GM12878 (cell line): ENCODE measurements at regions of chr4 and their contacts with region 1.

Region 1: DNA sequence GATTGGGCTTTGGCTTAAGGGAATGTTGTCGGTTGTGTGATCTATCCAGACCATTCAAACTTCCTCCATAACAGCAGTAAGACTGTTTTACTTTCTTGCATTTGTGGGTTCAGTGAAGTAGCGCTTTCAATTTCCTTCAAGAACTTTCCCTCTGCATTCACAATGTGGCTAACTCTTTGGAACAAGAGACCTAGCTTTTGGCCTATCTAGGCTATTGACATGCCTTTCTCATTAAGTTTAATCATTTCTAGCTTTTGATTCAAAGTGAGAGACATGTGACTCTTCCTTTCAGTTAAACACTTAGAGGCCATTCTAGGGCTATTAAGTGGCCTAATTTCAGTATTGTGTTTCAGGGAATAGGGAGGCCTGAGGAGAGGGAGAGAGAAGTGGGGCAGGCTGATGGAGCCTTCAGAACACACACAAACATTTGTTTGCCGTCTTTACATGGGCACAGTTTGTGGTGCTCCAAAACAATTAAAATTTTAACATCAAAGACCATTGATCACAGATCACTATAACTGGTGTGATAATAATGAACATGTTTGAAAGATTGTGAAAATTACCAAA is 34.1 kb downstream of the ADH5 start:
- DNase-seq: peak; percentile 26
- ATAC-seq: peak; percentile 79
- H3K4me3 ChIP-seq: no peak overlapping the region
- H3K27ac ChIP-seq: no peak overlapping the region
- H3K4me1 ChIP-seq: peaks cover 10% of the 10 kb centered on the region
- H3K27me3 ChIP-seq: no peaks in the 10 kb centered on the region
- CTCF ChIP-seq: no peak
- EP300 ChIP-seq: 0 out of 4 replicates have a peak, but pooled peaks of 1 of the 2 experiments have one; percentile 41
- POLR2A ChIP-seq: no peak
- RAD21 ChIP-seq: no peak

Region 2: GRCh38 chr4:98143001-98143899 is 911.3 kb before region 1 on chr4 and contains the start of gene STPG2:
- CTCF ChIA-PET with region 1: interaction called, 11 read pairs
- POLR2A ChIA-PET with region 1: no interaction called
- RAD21 ChIA-PET with region 1: no interaction called
- SMC1A ChIA-PET with region 1: no interaction called
- in situ Hi-C with region 1: loop called (anchors 10 kb)
- intact Hi-C with region 1: no loop called
- DNase-seq: peak; percentile 51
- ATAC-seq: peak; percentile 100
- H3K4me3 ChIP-seq: peak within 1 kb of the TSS; percentile 75
- H3K27ac ChIP-seq: peak within 1 kb of the TSS; percentile 92
- H3K4me1 ChIP-seq: peaks cover 3% of the 10 kb centered on the region
- H3K27me3 ChIP-seq: peaks cover 0 to 2% of the 10 kb centered on the region in 2 experiments; a peak in 1 of 4 replicates
- CTCF ChIP-seq: peak; percentile 33 to 55 (median 44)
- EP300 ChIP-seq: no peak
- POLR2A ChIP-seq: peak; percentile 79
- RAD21 ChIP-seq: 0 out of 2 replicates have a peak, but pooled peaks have one; percentile 12
- polyA plus RNA-seq, gene STPG2: not detected

Region 3: DNA sequence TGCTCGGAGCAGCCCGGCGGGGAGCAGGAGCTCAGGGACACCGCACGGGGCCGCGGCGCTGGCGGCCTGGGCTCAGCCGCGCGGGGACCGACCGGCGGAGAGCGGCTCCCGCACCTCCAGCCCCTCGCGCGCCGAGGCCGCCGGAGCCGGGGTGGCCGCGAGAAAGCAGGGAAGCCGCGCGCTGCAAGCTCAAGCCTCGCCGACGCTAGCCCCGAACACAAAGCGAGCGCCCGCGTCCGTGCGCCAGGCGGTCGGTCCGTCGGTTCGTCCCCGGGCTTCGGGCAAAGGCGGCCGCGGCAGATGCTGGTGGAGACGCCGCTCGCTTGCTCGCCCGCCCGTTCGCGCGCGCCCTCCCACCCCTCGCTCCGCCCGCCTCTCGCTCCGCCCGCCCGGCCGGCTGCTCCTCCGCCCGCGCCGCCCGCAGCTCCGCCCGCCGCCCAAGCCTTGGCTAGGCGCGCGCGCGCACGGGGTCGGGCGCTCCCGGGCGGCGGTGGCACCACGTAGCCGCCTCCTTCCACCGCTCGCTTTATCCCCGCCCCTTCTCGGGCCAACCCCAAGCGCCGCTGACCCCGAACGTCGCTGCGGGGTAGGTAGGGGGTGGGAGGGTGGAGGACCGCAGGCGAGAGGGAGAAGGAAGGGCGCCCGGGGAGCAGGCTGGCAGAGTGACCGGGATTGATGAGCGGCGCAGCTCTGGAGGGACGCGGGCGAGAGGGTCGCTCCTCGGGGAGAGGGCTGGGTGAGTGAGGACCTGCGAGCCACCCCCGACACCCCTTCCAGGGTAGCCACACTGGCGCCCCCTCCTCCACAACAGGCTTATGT is 396.0 kb before region 1 on chr4 and contains the start of gene TSPAN5:
- CTCF ChIA-PET with region 1: no interaction called
- POLR2A ChIA-PET with region 1: no interaction called
- RAD21 ChIA-PET with region 1: no interaction called
- SMC1A ChIA-PET with region 1: no interaction called
- in situ Hi-C with region 1: no loop called
- intact Hi-C with region 1: loop called (anchors 10 kb)
- DNase-seq: no peak
- ATAC-seq: peak; percentile 84
- H3K4me3 ChIP-seq: peak within 1 kb of the TSS; percentile 65
- H3K27ac ChIP-seq: no peak within 1 kb of the TSS
- H3K4me1 ChIP-seq: peaks cover 10% of the 10 kb centered on the region
- H3K27me3 ChIP-seq: peaks cover 4 to 23% of the 10 kb centered on the region in 2 experiments
- CTCF ChIP-seq: no peak
- EP300 ChIP-seq: no peak
- POLR2A ChIP-seq: peak; percentile 33; the same call in 1 of the 2 replicates
- RAD21 ChIP-seq: no peak
- polyA plus RNA-seq, gene TSPAN5: 0.22 to 0.23 TPM

Region 4: GRCh38 chr4:98939892-98940298 is 114.6 kb before region 1 on chr4:
- CTCF ChIA-PET with region 1: interaction called, 15 read pairs
- POLR2A ChIA-PET with region 1: no interaction called
- RAD21 ChIA-PET with region 1: no interaction called
- SMC1A ChIA-PET with region 1: interaction called, 3 read pairs
- in situ Hi-C with region 1: no loop called
- intact Hi-C with region 1: loop called (anchors 5 kb)
- DNase-seq: no peak
- ATAC-seq: peak; percentile 82
- H3K4me3 ChIP-seq: no peak overlapping the region
- H3K27ac ChIP-seq: no peak overlapping the region
- H3K4me1 ChIP-seq: no peaks in the 10 kb centered on the region
- H3K27me3 ChIP-seq: no peaks in the 10 kb centered on the region
- CTCF ChIP-seq: peak; percentile 48 to 73 (median 65)
- EP300 ChIP-seq: no peak
- POLR2A ChIP-seq: no peak
- RAD21 ChIP-seq: peak; percentile 48

Region 5: DNA sequence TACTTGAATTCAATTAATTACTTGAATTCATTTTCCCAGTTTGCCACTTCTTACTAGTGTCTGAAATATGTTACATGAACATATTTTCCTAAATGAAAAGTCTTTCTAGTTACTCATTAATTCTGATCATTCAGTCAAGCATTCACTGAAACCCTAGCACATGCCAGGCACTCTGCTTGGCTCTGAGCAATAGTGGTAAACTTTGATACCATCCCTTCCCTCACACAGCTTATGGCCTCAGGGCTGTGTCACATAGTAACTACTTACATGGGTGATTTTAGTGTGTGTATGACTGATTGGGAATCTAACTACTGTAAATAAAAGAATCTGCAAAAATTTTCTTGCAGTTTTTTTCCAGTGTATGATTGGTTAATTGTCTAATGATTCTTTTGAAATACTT is 26.3 kb before region 1 on chr4:
- CTCF ChIA-PET with region 1: interaction called, 19 read pairs
- POLR2A ChIA-PET with region 1: no interaction called
- RAD21 ChIA-PET with region 1: interaction called, 5 read pairs
- SMC1A ChIA-PET with region 1: interaction called, 15 read pairs
- in situ Hi-C with region 1: no loop called
- intact Hi-C with region 1: no loop called
- DNase-seq: no peak
- ATAC-seq: peak; percentile 85
- H3K4me3 ChIP-seq: no peak overlapping the region
- H3K27ac ChIP-seq: no peak overlapping the region
- H3K4me1 ChIP-seq: peaks cover 4% of the 10 kb centered on the region; the same call in 1 of the 2 replicates
- H3K27me3 ChIP-seq: no peaks in the 10 kb centered on the region
- CTCF ChIP-seq: no peak
- EP300 ChIP-seq: no peak
- POLR2A ChIP-seq: no peak
- RAD21 ChIP-seq: no peak

Region 6: DNA sequence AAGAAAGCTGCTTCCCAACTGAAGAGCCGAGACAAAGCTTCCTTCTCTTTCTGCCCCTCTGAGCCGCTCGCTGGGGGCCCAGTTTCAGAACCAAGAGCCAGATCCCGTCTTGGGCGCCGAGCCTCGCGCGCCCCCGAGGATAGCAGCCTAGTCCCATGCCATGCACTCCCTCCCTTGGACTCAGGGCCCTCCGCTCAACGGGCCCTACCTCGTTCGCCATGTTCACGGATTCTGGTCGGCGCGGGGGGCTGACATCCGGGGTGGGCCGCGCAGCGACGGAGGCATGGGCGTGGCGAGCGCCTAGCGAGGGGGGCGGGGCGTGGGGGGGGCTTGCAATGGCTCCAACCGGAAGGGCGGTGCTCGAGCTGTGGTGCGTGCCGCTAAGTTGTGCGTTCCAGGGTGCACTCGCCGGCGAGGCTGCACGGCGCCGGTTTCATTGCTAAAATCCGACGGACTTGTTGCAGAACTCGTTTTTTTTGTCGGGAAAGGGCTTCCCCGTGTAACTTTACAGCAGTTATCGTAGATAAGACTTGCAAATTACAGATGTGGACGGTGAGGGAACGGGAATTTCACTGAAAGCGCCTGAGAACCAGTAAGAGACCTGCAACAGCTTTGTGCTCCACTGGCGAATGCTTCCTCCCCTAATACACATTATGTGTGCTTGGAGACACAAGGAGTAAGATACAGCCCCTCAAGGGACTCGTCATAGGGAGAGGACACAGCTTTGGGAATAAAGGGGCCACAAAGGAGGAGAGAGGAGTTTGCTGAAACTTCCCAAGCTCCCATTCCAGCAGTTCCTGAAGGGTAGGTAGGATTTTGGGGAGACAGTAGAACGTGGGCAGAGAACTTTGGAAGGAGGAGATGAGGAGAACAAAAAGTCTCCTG is 34.2 kb after region 1 on chr4 and contains the start of gene ADH5:
- CTCF ChIA-PET with region 1: interaction called, 36 read pairs
- POLR2A ChIA-PET with region 1: interaction called, 3 read pairs
- RAD21 ChIA-PET with region 1: interaction called, 5 read pairs
- SMC1A ChIA-PET with region 1: interaction called, 7 read pairs
- in situ Hi-C with region 1: no loop called
- intact Hi-C with region 1: no loop called
- DNase-seq: peak; percentile 51
- ATAC-seq: peak; percentile 95
- H3K4me3 ChIP-seq: peak within 1 kb of the TSS; percentile 90
- H3K27ac ChIP-seq: peak within 1 kb of the TSS; percentile 76
- H3K4me1 ChIP-seq: no peaks in the 10 kb centered on the region
- H3K27me3 ChIP-seq: no peaks in the 10 kb centered on the region
- CTCF ChIP-seq: no peak
- EP300 ChIP-seq: no peak
- POLR2A ChIP-seq: peak; percentile 96
- RAD21 ChIP-seq: no peak
- polyA plus RNA-seq, gene ADH5: 96.3 to 134 TPM

Region 7: GRCh38 chr4:99991741-99992140 is 937.2 kb after region 1 on chr4:
- CTCF ChIA-PET with region 1: no interaction called
- POLR2A ChIA-PET with region 1: no interaction called
- RAD21 ChIA-PET with region 1: no interaction called
- SMC1A ChIA-PET with region 1: no interaction called
- in situ Hi-C with region 1: no loop called
- intact Hi-C with region 1: no loop called
- DNase-seq: no peak
- ATAC-seq: no peak
- H3K4me3 ChIP-seq: no peak overlapping the region
- H3K27ac ChIP-seq: no peak overlapping the region
- H3K4me1 ChIP-seq: no peaks in the 10 kb centered on the region
- H3K27me3 ChIP-seq: no peaks in the 10 kb centered on the region
- CTCF ChIP-seq: no peak
- EP300 ChIP-seq: no peak
- POLR2A ChIP-seq: no peak
- RAD21 ChIP-seq: no peak